ENCODE measurements at regions of chr16 and their contacts with region 1.

Region 1: DNA sequence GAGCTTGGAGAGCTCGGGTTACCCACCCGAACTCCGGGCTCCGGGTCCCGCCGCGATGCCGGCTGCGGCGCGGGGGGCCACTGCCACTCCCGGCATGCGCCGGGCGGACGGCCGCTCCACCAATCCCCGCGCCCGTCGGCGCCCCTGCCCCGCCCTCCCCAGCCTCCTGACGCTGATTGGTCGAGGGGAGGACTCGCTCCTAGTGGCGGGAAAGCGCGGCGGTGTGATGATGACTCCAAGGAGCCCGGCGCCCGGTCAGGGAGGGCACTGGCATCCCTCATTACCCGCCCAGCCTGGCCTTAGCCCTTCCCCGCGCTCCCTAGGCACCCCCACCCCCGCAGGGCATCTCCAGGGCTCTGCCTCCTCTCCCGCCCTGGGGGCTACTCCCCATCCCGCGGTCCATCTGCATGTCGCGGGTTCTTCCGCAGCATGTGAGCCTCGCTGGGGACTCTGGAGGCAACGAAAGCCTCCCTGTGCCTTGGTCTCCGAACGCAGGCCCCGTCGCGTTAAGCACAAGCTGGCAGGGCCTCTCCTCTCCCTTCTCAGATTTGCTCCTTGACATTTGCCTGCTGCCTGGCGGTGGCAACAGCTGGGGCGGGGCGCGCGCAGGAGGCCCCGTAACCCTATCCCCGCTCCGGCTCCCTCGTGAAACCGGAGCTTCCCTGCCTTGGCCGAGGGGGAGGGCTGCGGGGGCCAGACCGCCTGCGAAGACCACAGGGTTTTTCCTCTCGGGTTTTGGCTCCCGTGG is 1.7 kb downstream of the ATP2A1 start:
- DNase-seq: peak; percentile 77 to 83 (median 80)
- H3K4me3 ChIP-seq: peak overlapping the region; percentile 68 to 86 (median 70)
- H3K4me3 Mint-ChIP-seq: peak overlapping the region; percentile 86 to 94
- H3K27ac ChIP-seq: no peak overlapping the region
- H3K27ac Mint-ChIP-seq: no peak overlapping the region
- H3K4me1 ChIP-seq: peaks cover 14 to 19% of the 10 kb centered on the region in 2 donors
- H3K4me1 Mint-ChIP-seq: peaks cover 22% of the 10 kb centered on the region
- H3K27me3 ChIP-seq: peaks cover 0 to 11% of the 10 kb centered on the region in 2 donors
- H3K27me3 Mint-ChIP-seq: peaks cover 20 to 27% (median 21%) of the 10 kb centered on the region in 3 donors
- CTCF ChIP-seq: peak; percentile 20

Region 2: DNA sequence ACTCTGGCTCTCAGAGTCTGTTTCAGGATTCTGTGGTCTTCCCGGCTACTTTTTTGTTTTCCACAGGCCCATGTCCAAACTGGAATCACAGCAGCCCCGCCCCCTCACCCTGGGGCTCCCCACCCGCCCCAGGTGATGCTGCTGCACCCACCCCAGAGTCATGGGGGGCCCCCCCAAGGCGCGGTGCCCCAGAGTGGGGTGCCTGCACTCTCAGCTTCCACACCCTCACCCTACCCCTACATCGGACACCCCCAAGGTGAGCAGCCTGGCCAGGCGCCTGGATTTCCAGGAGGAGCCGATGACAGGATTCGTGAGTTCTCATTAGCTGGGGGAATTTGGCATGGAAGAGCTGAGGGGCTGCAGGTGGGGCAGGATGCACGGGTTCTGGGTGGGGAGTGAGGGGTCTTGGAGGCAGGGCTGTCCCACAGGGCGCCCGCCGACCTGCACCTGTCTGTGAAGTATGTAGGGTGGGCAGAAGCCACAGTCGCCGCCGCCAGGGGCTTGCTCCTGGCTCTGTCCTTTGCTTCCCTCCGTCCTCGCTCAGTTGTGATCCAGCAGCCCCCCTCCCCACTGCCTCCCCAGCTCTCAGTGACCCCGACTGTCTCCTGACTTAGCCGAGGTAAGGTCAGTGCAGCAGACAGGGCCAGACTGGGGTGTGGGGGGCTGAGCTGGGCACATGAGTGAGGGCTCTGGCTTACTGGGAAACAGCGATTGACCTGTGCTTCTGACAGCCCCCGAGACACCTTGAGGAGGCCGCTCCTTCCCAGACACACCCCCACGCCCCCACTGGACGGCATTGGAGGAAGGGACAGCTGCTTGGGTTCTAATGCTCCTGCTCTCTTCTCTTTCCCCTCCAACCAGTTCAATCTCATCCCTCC is 43.9 kb before region 1 on chr16:
- intact Hi-C with region 1: no loop called
- DNase-seq: no peak
- H3K4me3 ChIP-seq: no peak overlapping the region
- H3K4me3 Mint-ChIP-seq: no peak overlapping the region
- H3K27ac ChIP-seq: no peak overlapping the region
- H3K27ac Mint-ChIP-seq: peak overlapping the region in 2 of 7 donors; percentile 7 to 40
- H3K4me1 ChIP-seq: peaks cover 13 to 20% of the 10 kb centered on the region in 2 donors
- H3K4me1 Mint-ChIP-seq: peaks cover 20% of the 10 kb centered on the region
- H3K27me3 ChIP-seq: no peaks in the 10 kb centered on the region
- H3K27me3 Mint-ChIP-seq: no peaks in the 10 kb centered on the region
- CTCF ChIP-seq: no peak

Region 3: DNA sequence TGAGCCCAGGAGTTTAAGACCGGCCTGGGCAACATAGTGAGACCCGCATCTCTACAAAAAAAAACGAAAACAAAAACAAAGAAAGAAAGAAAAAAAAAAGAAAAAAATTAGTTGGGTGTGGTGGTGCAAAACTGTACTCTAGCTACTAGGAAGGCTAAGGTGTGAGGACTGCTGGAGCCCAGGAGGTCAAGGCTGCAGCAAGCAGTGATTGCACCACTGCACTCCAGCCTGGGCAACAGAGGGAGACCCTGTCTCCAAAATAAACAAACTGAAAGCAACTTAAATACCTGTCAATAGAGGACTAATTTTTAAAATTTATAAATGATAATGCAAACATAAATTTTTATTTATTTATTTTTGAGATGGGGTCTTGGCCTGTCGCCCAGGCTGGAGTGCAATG is 15.6 kb after region 1 on chr16:
- intact Hi-C with region 1: loop called in 1 of 2 experiments (anchors 2 kb)
- DNase-seq: no peak
- H3K4me3 ChIP-seq: no peak overlapping the region
- H3K4me3 Mint-ChIP-seq: no peak overlapping the region
- H3K27ac ChIP-seq: no peak overlapping the region
- H3K27ac Mint-ChIP-seq: no peak overlapping the region
- H3K4me1 ChIP-seq: no peaks in the 10 kb centered on the region
- H3K4me1 Mint-ChIP-seq: no peaks in the 10 kb centered on the region
- H3K27me3 ChIP-seq: no peaks in the 10 kb centered on the region
- H3K27me3 Mint-ChIP-seq: peaks cover 0 to 2% (median 0%) of the 10 kb centered on the region in 3 donors
- CTCF ChIP-seq: no peak

Region 4: DNA sequence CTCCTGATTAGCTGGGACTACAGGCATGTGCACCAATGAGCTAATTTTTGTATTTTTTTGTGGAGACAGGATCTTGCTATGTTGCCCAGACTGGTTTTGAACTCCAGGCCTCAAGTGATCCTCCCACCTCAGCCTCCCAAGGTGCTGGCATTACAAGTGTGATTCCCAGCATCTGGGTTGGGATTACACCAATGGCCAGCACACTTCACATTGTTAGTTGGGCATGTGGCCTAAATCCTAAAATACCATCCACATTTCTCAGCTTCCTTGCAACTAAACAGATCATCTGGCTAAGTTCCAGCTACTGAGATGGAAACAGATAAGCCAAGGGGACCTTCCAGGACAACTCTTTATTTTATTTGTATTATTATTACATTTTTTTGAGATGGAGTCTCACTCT is 35.2 kb after region 1 on chr16:
- intact Hi-C with region 1: loop called in 1 of 2 experiments (anchors 5 kb)
- DNase-seq: no peak
- H3K4me3 ChIP-seq: no peak overlapping the region
- H3K4me3 Mint-ChIP-seq: no peak overlapping the region
- H3K27ac ChIP-seq: no peak overlapping the region
- H3K27ac Mint-ChIP-seq: no peak overlapping the region
- H3K4me1 ChIP-seq: no peaks in the 10 kb centered on the region
- H3K4me1 Mint-ChIP-seq: no peaks in the 10 kb centered on the region
- H3K27me3 ChIP-seq: no peaks in the 10 kb centered on the region
- H3K27me3 Mint-ChIP-seq: peaks cover 0 to 1% (median 1%) of the 10 kb centered on the region in 3 donors
- CTCF ChIP-seq: no peak

Region 5: DNA sequence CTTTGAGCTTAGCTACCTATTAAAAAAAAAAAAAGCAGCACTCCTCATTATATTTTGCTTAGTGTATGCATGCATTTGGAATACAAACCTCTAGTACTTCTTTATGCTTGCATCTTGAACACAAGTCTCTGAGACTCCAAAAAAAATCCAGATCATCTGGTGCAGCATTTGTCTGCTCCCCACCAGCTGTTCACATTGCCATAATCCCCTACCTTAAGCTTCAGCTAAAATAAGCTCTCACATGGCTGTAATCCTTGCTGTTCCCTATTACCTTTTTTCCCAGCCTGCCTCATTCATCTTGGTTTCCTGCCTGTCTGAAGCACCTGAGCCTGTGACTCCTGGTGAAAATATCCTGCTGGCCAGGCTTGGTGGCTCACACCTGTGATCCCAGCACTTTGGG is 63.3 kb after region 1 on chr16:
- intact Hi-C with region 1: loop called in 1 of 2 experiments (anchors 2 kb)
- DNase-seq: no peak
- H3K4me3 ChIP-seq: no peak overlapping the region
- H3K4me3 Mint-ChIP-seq: no peak overlapping the region
- H3K27ac ChIP-seq: no peak overlapping the region
- H3K27ac Mint-ChIP-seq: no peak overlapping the region
- H3K4me1 ChIP-seq: peaks cover 8 to 10% of the 10 kb centered on the region in 2 donors
- H3K4me1 Mint-ChIP-seq: peaks cover 14% of the 10 kb centered on the region
- H3K27me3 ChIP-seq: no peaks in the 10 kb centered on the region
- H3K27me3 Mint-ChIP-seq: peaks cover 3 to 4% (median 4%) of the 10 kb centered on the region in 3 donors
- CTCF ChIP-seq: no peak

Region 6: GRCh38 chr16:28958836-28959235 is 78.8 kb after region 1 on chr16:
- intact Hi-C with region 1: no loop called
- DNase-seq: no peak
- H3K4me3 ChIP-seq: no peak overlapping the region
- H3K4me3 Mint-ChIP-seq: no peak overlapping the region
- H3K27ac ChIP-seq: no peak overlapping the region
- H3K27ac Mint-ChIP-seq: peak overlapping the region in 2 of 7 donors; percentile 26 to 53
- H3K4me1 ChIP-seq: no peaks in the 10 kb centered on the region
- H3K4me1 Mint-ChIP-seq: no peaks in the 10 kb centered on the region
- H3K27me3 ChIP-seq: no peaks in the 10 kb centered on the region
- H3K27me3 Mint-ChIP-seq: no peaks in the 10 kb centered on the region
- CTCF ChIP-seq: no peak

Measured in CD14-positive monocyte (primary cell).